ENCODE measurements at regions of chr5 and their contacts with region 1.

Region 1: GRCh38 chr5:17294639-17295311 is 77.3 kb downstream of the BASP1 start:
- DNase-seq: no peak
- H3K4me3 Mint-ChIP-seq: no peak overlapping the region
- H3K27ac Mint-ChIP-seq: no peak overlapping the region
- H3K4me1 Mint-ChIP-seq: no peaks in the 10 kb centered on the region
- H3K27me3 Mint-ChIP-seq: peaks cover 39% of the 10 kb centered on the region
- CTCF ChIP-seq: no peak

Region 2: GRCh38 chr5:16410338-16410737 is 884.4 kb before region 1 on chr5:
- CTCF ChIA-PET with region 1: interaction called, 12 read pairs
- intact Hi-C with region 1: no loop called
- DNase-seq: no peak
- H3K4me3 Mint-ChIP-seq: no peak overlapping the region
- H3K27ac Mint-ChIP-seq: no peak overlapping the region
- H3K4me1 Mint-ChIP-seq: no peaks in the 10 kb centered on the region
- H3K27me3 Mint-ChIP-seq: peaks cover 39% of the 10 kb centered on the region
- CTCF ChIP-seq: no peak

Measured in Calu3 (cell line).